ENCODE measurements at regions of chrX and their contacts with region 1.

Region 1: DNA sequence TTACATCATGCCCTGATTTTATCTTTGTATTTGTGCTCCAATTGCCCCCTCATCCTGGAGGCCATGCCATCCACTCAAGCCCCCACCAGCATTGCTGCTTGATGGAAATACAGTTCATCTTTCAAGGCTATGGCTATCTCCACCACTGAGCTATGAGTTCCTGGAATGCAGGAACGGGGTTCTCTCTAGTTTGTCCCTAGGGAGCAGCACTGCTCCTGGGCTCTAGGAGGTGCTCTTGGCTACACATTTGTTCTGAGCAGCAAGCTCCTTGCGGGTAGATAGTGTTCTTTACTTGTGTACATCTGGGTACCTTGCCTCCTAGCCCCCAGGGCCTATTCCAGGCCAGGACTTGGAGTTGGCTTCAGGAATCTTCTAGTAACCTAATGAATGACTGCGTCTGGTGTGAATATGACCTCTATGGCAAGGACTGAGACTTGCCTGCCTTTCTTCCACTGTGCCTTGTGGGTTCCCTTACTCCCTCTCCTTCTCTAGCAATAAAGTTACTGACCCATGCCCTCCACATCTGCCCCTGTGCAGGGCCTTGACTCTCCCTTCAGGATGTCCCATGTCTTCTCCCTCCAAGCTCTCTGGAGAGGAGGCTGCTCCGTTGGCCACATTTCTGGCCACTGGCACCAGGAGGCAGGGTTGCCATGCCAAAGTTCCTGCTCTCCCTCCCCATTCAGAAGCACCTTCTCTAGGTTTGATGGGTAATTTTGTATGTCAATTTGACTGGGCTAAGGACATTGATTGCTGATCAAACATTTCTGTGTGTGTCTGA is 7.6 kb downstream of the CITED1 start:
- DNase-seq: peak in 1 of 2 experiments; percentile 32
- H3K4me3 ChIP-seq: no peak overlapping the region
- H3K4me1 ChIP-seq: no peaks in the 10 kb centered on the region
- H3K27me3 ChIP-seq: peaks cover 4% of the 10 kb centered on the region; the same call in 1 of the 2 replicates

Region 2: DNA sequence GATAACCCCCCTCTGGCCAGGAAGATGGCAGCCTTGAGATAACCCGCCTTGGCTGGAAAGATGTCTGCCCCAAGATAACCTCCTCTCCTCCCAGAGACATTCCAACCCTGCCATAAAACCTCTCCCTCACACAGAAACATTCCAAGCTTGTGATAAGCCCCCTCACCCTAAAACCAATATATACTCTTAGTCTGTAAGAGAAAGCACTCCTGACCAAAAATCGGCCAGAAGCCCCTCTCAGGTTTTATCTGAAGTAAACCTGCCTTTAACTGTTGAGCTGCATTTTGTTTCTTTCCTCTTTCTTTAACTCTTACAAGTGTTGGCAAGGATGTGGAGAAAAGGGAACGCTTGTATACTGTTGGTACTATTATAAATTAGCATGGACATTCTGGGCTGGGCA is 67.9 kb before region 1 on chrX:
- in situ Hi-C with region 1: no loop called
- DNase-seq: no peak
- H3K4me3 ChIP-seq: no peak overlapping the region
- H3K4me1 ChIP-seq: peaks cover 10% of the 10 kb centered on the region
- H3K27me3 ChIP-seq: no peaks in the 10 kb centered on the region

Region 3: DNA sequence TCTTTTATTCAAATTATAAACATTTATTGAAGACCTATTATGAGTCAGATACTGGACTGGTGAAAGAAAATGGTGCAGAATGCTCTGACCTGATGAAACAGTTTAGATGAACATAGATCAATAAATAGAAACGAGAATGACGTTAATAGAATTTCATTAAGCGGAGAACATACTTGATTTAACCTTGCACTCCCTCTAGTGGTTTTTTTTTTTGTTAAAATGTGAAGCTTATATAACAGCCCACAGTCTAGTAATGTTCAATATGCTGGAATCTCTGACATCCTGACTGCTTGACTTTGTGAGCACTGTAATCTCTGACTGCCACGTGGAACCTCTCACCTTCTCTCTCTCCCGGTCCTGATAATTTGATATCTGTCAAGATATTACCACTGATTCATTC is 242.2 kb after region 1 on chrX:
- in situ Hi-C with region 1: loop called (anchors 25 kb)
- DNase-seq: peak in 1 of 2 experiments; percentile 50
- H3K4me3 ChIP-seq: no peak overlapping the region
- H3K4me1 ChIP-seq: no peaks in the 10 kb centered on the region
- H3K27me3 ChIP-seq: no peaks in the 10 kb centered on the region

Region 4: DNA sequence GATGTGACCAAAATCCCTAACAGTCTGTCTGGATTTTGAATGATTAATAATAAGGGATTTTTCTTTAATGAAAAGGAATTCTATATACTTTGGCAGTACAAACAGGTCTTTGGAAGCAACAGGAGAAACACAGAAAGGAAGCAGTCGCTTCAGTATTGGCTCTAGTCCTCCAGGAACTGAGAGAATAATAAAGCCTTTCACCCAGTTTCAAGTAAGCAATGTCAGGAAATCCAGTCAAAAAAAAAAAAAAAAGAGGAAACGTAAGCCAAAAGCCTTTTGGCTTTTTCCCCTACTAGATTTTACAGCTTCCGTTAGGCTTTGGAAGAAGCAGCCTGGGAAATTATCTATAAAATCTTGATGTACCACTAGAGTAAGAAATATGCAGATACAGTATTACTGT is 336.2 kb after region 1 on chrX:
- in situ Hi-C with region 1: no loop called
- DNase-seq: no peak
- H3K4me3 ChIP-seq: no peak overlapping the region
- H3K4me1 ChIP-seq: no peaks in the 10 kb centered on the region
- H3K27me3 ChIP-seq: no peaks in the 10 kb centered on the region